Caco-2 (cell line): ENCODE measurements at regions of chr19 and their contacts with region 1.

Region 1: GRCh38 chr19:46860125-46860845 is 512 bp upstream of the ARHGAP35 start:
- DNase-seq: peak; percentile 99 to 100
- H3K4me3 ChIP-seq: peak overlapping the region; percentile 90
- H3K4me3 Mint-ChIP-seq: no peak overlapping the region
- H3K27ac Mint-ChIP-seq: peak overlapping the region; percentile 74
- H3K4me1 ChIP-seq: peaks cover 32% of the 10 kb centered on the region
- H3K4me1 Mint-ChIP-seq: peaks cover 10% of the 10 kb centered on the region
- H3K27me3 ChIP-seq: no peaks in the 10 kb centered on the region
- H3K27me3 Mint-ChIP-seq: no peaks in the 10 kb centered on the region
- CTCF ChIP-seq: no peak

Region 2: GRCh38 chr19:46542428-46543230 is 317.7 kb before region 1 on chr19:
- CTCF ChIA-PET with region 1: no interaction called
- POLR2A ChIA-PET with region 1: no interaction called
- intact Hi-C with region 1: no loop called
- DNase-seq: peak; percentile 83 to 91
- H3K4me3 ChIP-seq: no peak overlapping the region
- H3K4me3 Mint-ChIP-seq: no peak overlapping the region
- H3K27ac Mint-ChIP-seq: no peak overlapping the region
- H3K4me1 ChIP-seq: peaks cover 8% of the 10 kb centered on the region
- H3K4me1 Mint-ChIP-seq: no peaks in the 10 kb centered on the region
- H3K27me3 ChIP-seq: no peaks in the 10 kb centered on the region
- H3K27me3 Mint-ChIP-seq: peaks cover 7% of the 10 kb centered on the region
- CTCF ChIP-seq: peak; percentile 75 to 94

Region 3: GRCh38 chr19:46902402-46902766 is 42.1 kb after region 1 on chr19:
- CTCF ChIA-PET with region 1: interaction called, 3 read pairs
- POLR2A ChIA-PET with region 1: no interaction called
- intact Hi-C with region 1: loop called (anchors 1 kb)
- DNase-seq: peak; percentile 61 to 67
- H3K4me3 ChIP-seq: no peak overlapping the region
- H3K4me3 Mint-ChIP-seq: peak overlapping the region; percentile 1
- H3K27ac Mint-ChIP-seq: peak overlapping the region; percentile 56
- H3K4me1 ChIP-seq: peaks cover 48% of the 10 kb centered on the region
- H3K4me1 Mint-ChIP-seq: peaks cover 51% of the 10 kb centered on the region
- H3K27me3 ChIP-seq: no peaks in the 10 kb centered on the region
- H3K27me3 Mint-ChIP-seq: no peaks in the 10 kb centered on the region
- CTCF ChIP-seq: no peak

Region 4: GRCh38 chr19:46924874-46925547 is 64.7 kb after region 1 on chr19:
- CTCF ChIA-PET with region 1: interaction called, 5 read pairs
- POLR2A ChIA-PET with region 1: interaction called, 3 read pairs
- intact Hi-C with region 1: loop called (anchors 2 kb)
- DNase-seq: peak; percentile 20 to 36
- H3K4me3 ChIP-seq: no peak overlapping the region
- H3K4me3 Mint-ChIP-seq: peak overlapping the region; percentile 50
- H3K27ac Mint-ChIP-seq: peak overlapping the region; percentile 80
- H3K4me1 ChIP-seq: peaks cover 34% of the 10 kb centered on the region
- H3K4me1 Mint-ChIP-seq: peaks cover 32% of the 10 kb centered on the region
- H3K27me3 ChIP-seq: no peaks in the 10 kb centered on the region
- H3K27me3 Mint-ChIP-seq: no peaks in the 10 kb centered on the region
- CTCF ChIP-seq: no peak

Region 5: GRCh38 chr19:46990991-46991676 is 130.8 kb after region 1 on chr19:
- CTCF ChIA-PET with region 1: interaction called, 15 read pairs
- POLR2A ChIA-PET with region 1: interaction called, 7 read pairs
- intact Hi-C with region 1: loop called (anchors 1 kb)
- DNase-seq: peak; percentile 81 to 86
- H3K4me3 ChIP-seq: no peak overlapping the region
- H3K4me3 Mint-ChIP-seq: no peak overlapping the region
- H3K27ac Mint-ChIP-seq: no peak overlapping the region
- H3K4me1 ChIP-seq: peaks cover 4% of the 10 kb centered on the region; the same call in 1 of the 2 replicates
- H3K4me1 Mint-ChIP-seq: peaks cover 5% of the 10 kb centered on the region
- H3K27me3 ChIP-seq: no peaks in the 10 kb centered on the region
- H3K27me3 Mint-ChIP-seq: no peaks in the 10 kb centered on the region
- CTCF ChIP-seq: peak; percentile 88 to 92

Region 6: DNA sequence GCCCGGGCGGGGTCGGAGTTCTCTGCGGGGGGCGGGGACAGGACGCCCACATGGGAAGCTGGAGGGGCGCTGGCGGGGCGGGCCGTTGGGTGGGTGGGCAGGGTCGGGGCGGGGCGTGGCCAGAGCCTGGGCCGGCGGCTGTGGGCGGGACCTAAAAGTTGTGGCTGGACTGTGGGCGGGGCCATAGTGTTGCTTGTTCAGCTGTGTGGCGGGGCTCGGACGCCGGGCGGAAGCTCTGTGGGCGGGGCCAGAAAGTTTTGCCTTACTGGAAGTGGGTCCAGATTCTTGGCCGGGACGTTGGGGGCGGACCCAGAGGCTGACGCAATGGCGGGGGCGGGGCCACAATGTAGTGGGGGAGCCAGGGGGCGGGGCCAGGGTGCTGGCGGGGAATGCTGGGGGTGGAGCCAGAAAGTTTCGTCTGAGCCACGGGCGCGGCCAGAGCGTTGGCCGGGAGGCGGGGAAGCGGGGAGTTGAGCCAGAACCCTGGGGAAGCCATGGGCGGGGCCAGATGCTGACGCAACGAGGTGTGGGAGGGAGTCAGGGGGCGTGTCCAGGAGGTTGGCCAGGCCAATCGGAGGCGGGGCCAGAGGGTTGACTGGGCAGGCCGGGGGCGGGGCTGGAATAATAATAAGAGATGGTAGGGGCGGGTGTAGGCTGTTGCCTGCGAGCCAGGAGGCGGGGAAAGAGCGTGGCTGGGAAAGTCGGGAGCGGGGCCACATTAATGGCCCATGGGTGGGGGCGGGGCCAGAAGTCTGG is 396.6 kb after region 1 on chr19:
- CTCF ChIA-PET with region 1: no interaction called
- POLR2A ChIA-PET with region 1: no interaction called
- intact Hi-C with region 1: loop called (anchors 10 kb)
- DNase-seq: peak; percentile 100
- H3K4me3 ChIP-seq: peak overlapping the region; percentile 76
- H3K4me3 Mint-ChIP-seq: peak overlapping the region; percentile 92
- H3K27ac Mint-ChIP-seq: peak overlapping the region; percentile 96
- H3K4me1 ChIP-seq: peaks cover 22% of the 10 kb centered on the region
- H3K4me1 Mint-ChIP-seq: peaks cover 14% of the 10 kb centered on the region
- H3K27me3 ChIP-seq: no peaks in the 10 kb centered on the region
- H3K27me3 Mint-ChIP-seq: no peaks in the 10 kb centered on the region
- CTCF ChIP-seq: no peak